HepG2 (cell line): ENCODE measurements at regions of chr12 and their contacts with region 1.

Region 1: GRCh38 chr12:93569656-93570551 is 2.6 kb upstream of the SOCS2 start:
- DNase-seq: peak; percentile 80
- ATAC-seq: peak; percentile 62
- H3K4me3 ChIP-seq: peak overlapping the region; percentile 64 to 81 (median 71)
- H3K27ac ChIP-seq: no peak overlapping the region
- H3K4me1 ChIP-seq: peaks cover 24% of the 10 kb centered on the region
- H3K27me3 ChIP-seq: peaks cover 3 to 24% of the 10 kb centered on the region in 2 experiments; a peak in 4 of 5 replicates
- CTCF ChIP-seq: peak; percentile 77
- EP300 ChIP-seq: peak in 1 of 2 experiments; percentile 31; a peak in 2 of 4 replicates
- POLR2A ChIP-seq: no peak
- RAD21 ChIP-seq: peak; percentile 59

Region 2: DNA sequence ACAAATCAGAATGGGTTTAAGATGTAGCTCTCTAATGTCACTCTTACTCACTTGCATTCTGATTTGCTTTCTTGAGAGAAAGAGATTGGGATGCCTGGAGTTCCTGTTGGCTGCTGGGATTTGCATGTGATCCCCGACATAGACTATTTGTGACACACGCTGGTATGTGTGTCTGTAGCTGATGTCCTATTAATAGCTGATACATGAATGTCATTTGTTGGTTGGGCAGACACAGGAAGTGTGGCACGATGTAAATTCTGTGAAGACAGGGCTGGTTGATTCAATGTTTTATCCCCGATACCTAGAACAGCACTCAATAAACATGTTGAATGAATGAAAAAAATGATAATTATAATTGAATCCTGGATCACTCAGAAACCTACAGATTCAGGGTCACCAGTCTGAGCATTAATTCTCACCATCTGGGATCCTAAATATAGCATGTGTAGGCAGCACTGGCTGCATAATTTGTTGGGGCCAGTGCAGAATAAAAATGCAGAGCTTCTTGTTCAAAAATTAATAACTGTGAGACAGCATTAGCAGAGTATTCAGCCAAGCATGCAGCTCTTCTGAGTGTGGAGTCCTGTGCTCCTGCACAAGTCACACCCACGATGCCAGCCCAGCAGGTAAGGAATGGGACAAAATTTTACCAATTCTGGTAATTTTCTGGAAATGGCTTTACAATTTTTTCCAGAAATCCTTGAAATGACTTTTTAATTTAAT is 33.0 kb before region 1 on chr12:
- CTCF ChIA-PET with region 1: no interaction called
- POLR2A ChIA-PET with region 1: no interaction called
- in situ Hi-C with region 1: no loop called
- intact Hi-C with region 1: no loop called
- DNase-seq: no peak
- ATAC-seq: no peak
- H3K4me3 ChIP-seq: no peak overlapping the region
- H3K27ac ChIP-seq: no peak overlapping the region
- H3K4me1 ChIP-seq: peaks cover 7% of the 10 kb centered on the region
- H3K27me3 ChIP-seq: peaks cover 0 to 3% of the 10 kb centered on the region in 2 experiments; a peak in 1 of 5 replicates
- CTCF ChIP-seq: no peak
- EP300 ChIP-seq: no peak
- POLR2A ChIP-seq: no peak
- RAD21 ChIP-seq: no peak

Region 3: GRCh38 chr12:93663006-93663728 is 93.3 kb after region 1 on chr12:
- CTCF ChIA-PET with region 1: no interaction called
- POLR2A ChIA-PET with region 1: no interaction called
- in situ Hi-C with region 1: no loop called
- intact Hi-C with region 1: loop called (anchors 2 kb)
- DNase-seq: peak; percentile 94
- ATAC-seq: peak; percentile 97
- H3K4me3 ChIP-seq: no peak overlapping the region; a peak in 1 of 6 replicates
- H3K27ac ChIP-seq: peak overlapping the region; percentile 74
- H3K4me1 ChIP-seq: peaks cover 37% of the 10 kb centered on the region
- H3K27me3 ChIP-seq: no peaks in the 10 kb centered on the region
- CTCF ChIP-seq: 0 out of 2 replicates have a peak, but pooled peaks have one; percentile 4
- EP300 ChIP-seq: peak; percentile 77 to 93; a peak in 3 of 4 replicates
- POLR2A ChIP-seq: no peak
- RAD21 ChIP-seq: peak; percentile 44; the same call in 1 of the 2 replicates

Region 4: GRCh38 chr12:93677195-93678064 is 107.5 kb after region 1 on chr12 and contains the start of gene CRADD:
- CTCF ChIA-PET with region 1: no interaction called
- POLR2A ChIA-PET with region 1: interaction called, 3 read pairs
- in situ Hi-C with region 1: no loop called
- intact Hi-C with region 1: loop called (anchors 5 kb)
- DNase-seq: peak; percentile 98
- ATAC-seq: peak; percentile 93
- H3K4me3 ChIP-seq: peak within 1 kb of the TSS; percentile 70 to 87 (median 71)
- H3K27ac ChIP-seq: peak within 1 kb of the TSS; percentile 98
- H3K4me1 ChIP-seq: peaks cover 35% of the 10 kb centered on the region
- H3K27me3 ChIP-seq: no peaks in the 10 kb centered on the region; a peak in 1 of 5 replicates
- CTCF ChIP-seq: peak; percentile 3; the same call in 1 of the 2 replicates
- EP300 ChIP-seq: 0 out of 4 replicates have a peak, but pooled peaks of 1 of the 2 experiments have one; percentile 52
- POLR2A ChIP-seq: peak; percentile 67 to 90; a peak in 3 of 4 replicates
- RAD21 ChIP-seq: no peak; the same call in 1 of the 2 replicates
- total RNA-seq, gene CRADD: 18.8 and 22.3 TPM in 2 replicates

Region 5: GRCh38 chr12:93742110-93742934 is 172.4 kb after region 1 on chr12:
- CTCF ChIA-PET with region 1: interaction called, 4 read pairs
- POLR2A ChIA-PET with region 1: no interaction called
- in situ Hi-C with region 1: loop called (anchors 5 kb)
- intact Hi-C with region 1: loop called (anchors 1 kb)
- DNase-seq: peak; percentile 55
- ATAC-seq: peak; percentile 100
- H3K4me3 ChIP-seq: peak overlapping the region; percentile 59 to 84 (median 77)
- H3K27ac ChIP-seq: peak overlapping the region; percentile 63
- H3K4me1 ChIP-seq: peaks cover 30% of the 10 kb centered on the region
- H3K27me3 ChIP-seq: no peaks in the 10 kb centered on the region
- CTCF ChIP-seq: peak; percentile 60
- EP300 ChIP-seq: peak; percentile 28 to 29; a peak in 1 of 4 replicates
- POLR2A ChIP-seq: no peak
- RAD21 ChIP-seq: peak; percentile 91

Region 6: DNA sequence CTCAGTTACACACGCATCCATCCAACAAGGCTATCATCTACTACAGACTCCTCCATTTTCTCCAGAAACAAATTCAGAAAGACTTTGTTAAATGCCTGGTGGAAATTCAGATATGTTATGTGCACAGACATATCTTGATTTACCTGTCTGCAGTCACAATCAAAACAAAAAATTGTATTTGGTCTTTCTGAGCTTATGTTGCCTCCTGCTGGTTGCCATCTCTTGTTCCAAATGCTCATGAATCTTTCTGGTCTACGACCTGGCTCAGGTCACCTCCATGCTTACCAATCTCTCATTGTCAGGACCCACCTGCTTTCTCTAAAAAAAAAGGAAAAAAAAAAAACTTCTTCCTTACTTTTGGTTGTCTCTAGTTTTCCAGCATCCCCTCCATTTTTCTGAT is 409.3 kb after region 1 on chr12:
- CTCF ChIA-PET with region 1: interaction called, 3 read pairs
- POLR2A ChIA-PET with region 1: no interaction called
- in situ Hi-C with region 1: no loop called
- intact Hi-C with region 1: loop called (anchors 2 kb)
- DNase-seq: no peak
- ATAC-seq: no peak
- H3K4me3 ChIP-seq: no peak overlapping the region
- H3K27ac ChIP-seq: no peak overlapping the region
- H3K4me1 ChIP-seq: no peaks in the 10 kb centered on the region
- H3K27me3 ChIP-seq: peaks cover 0 to 7% of the 10 kb centered on the region in 2 experiments; a peak in 2 of 5 replicates
- CTCF ChIP-seq: peak; percentile 60
- EP300 ChIP-seq: no peak
- POLR2A ChIP-seq: no peak
- RAD21 ChIP-seq: peak; percentile 39; the same call in 1 of the 2 replicates